ENCODE measurements at regions of chr1 and their contacts with region 1.

Region 1: GRCh38 chr1:164707868-164708331 is 148.9 kb downstream of the PBX1 start:
- DNase-seq: no peak
- ATAC-seq: peak; percentile 55

Region 2: GRCh38 chr1:164558461-164559341 is 149.2 kb before region 1 on chr1 and contains the start of gene PBX1:
- intact Hi-C with region 1: loop called (anchors 5 kb)
- DNase-seq: peak; percentile 98
- ATAC-seq: peak; percentile 99
- total RNA-seq, gene PBX1: 78.8 TPM

Region 3: GRCh38 chr1:164644774-164645235 is 63.1 kb before region 1 on chr1:
- intact Hi-C with region 1: loop called (anchors 5 kb)
- DNase-seq: no peak
- ATAC-seq: no peak

Region 4: GRCh38 chr1:164780863-164781262 is 73.0 kb after region 1 on chr1:
- intact Hi-C with region 1: loop called (anchors 5 kb)
- DNase-seq: no peak
- ATAC-seq: peak; percentile 81